Activated T-helper 2 cell treated with anti-CD3 and anti-CD28 coated beads, Interferon-gamma antibody, Interleukin-2, Interleukin-4, amounts not matched to agents 10 μg/mL and 5 μg/mL and 100 μg/mL, durations not matched to agents 14 hours and 24 hours and 36 hours (primary cell): ENCODE measurements at regions of chr16 and their contacts with region 1.

Region 1: DNA sequence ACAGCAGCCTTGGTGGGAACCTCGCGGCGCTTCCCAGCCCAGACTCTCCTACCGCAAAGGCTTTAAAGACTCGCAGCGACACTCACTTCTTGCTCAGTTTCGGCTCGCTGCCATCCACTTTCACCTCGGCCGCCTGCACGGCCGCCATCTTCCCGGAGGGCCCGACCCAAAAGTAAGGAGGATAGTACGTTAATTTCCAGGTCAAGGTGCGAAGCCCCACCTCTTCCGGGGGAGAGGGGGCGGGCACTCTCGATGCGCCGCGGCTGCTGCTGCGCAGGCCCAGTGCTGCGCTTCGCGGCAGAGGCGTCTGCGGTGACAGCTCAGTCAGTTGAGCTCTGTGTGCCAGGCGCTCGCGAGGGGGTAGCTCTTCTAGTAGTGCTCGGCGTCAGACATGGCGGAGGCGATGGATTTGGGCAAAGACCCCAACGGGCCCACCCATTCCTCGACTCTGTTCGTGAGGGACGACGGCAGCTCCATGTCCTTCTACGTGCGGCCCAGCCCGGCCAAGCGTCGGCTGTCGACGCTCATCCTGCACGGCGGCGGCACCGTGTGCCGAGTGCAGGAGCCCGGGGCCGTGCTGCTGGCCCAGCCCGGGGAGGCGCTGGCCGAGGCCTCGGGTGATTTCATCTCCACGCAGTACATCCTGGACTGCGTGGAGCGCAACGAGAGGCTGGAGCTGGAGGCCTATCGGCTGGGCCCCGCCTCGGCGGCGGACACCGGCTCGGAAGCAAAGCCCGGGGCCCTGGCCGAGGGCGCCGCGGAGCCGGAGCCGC is at the starts of genes KARS1 and TERF2IP:
- DNase-seq: peak; percentile 94
- H3K4me3 Mint-ChIP-seq: peak within 1 kb of the TSS; percentile 96
- H3K27ac Mint-ChIP-seq: peak within 1 kb of the TSS; percentile 96
- H3K4me1 Mint-ChIP-seq: peaks cover 48% of the 10 kb centered on the region
- H3K27me3 Mint-ChIP-seq: no peaks in the 10 kb centered on the region
- total RNA-seq, gene KARS1: 256 and 269 TPM in 2 replicates
- total RNA-seq, gene TERF2IP: 73.6 and 77.6 TPM in 2 replicates

Region 2: DNA sequence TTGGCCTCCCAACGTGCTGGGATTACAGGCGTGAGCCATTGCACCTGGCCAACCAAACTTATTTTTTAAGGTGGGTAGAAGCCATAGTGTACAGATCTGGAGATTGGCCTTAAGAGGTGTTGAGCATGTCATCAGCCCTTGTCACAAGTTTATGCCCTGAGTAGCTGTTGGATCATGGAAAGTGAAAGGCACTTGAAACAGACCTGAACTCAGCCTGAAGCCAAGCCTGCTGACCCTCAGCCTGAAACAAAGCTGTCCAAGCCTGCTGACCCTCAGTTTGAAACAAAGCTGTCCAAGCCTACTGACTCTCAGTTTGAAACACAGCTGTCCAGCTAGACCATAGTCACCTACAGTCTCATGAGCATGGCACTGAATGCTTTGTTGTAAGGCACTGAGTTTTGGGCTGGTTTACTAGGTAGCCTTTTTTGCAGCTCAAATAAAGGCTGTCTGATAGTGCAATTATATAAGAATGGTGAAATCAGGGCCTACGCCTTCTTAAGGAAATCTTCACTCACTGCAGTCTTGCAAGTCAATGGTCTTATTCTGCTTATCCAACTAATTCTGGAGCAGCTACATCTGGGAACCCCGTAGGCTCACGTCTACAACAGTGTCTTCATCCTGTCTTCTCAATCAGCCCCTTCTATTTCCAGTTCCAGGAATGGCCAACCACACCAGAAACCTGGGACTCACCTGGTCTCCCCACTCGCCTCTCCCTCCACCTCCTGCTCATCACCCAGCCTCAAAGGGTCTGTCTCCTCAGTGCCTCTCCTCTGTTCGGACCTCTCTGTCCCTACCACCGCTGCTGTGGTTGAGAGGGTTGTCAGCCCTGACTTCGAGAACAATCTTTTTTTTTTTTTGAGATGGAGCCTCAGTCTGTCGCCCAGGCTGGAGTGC is 1274.5 kb before region 1 on chr16:
- intact Hi-C with region 1: loop called (anchors 5 kb)
- DNase-seq: no peak
- H3K4me3 Mint-ChIP-seq: no peak overlapping the region
- H3K27ac Mint-ChIP-seq: no peak overlapping the region
- H3K4me1 Mint-ChIP-seq: peaks cover 2% of the 10 kb centered on the region
- H3K27me3 Mint-ChIP-seq: no peaks in the 10 kb centered on the region

Region 3: GRCh38 chr16:75432828-75433731 is 214.6 kb before region 1 on chr16 and contains the start of gene CFDP1:
- intact Hi-C with region 1: loop called (anchors 1 kb)
- DNase-seq: peak; percentile 93
- H3K4me3 Mint-ChIP-seq: peak within 1 kb of the TSS; percentile 87
- H3K27ac Mint-ChIP-seq: peak within 1 kb of the TSS; percentile 94
- H3K4me1 Mint-ChIP-seq: peaks cover 16% of the 10 kb centered on the region
- H3K27me3 Mint-ChIP-seq: no peaks in the 10 kb centered on the region
- total RNA-seq, gene CFDP1: 33.5 and 37.5 TPM in 2 replicates

Region 4: GRCh38 chr16:75519881-75520280 is 127.8 kb before region 1 on chr16:
- intact Hi-C with region 1: loop called (anchors 1 kb)
- DNase-seq: no peak
- H3K4me3 Mint-ChIP-seq: no peak overlapping the region
- H3K27ac Mint-ChIP-seq: no peak overlapping the region
- H3K4me1 Mint-ChIP-seq: peaks cover 7% of the 10 kb centered on the region
- H3K27me3 Mint-ChIP-seq: peaks cover 7% of the 10 kb centered on the region

Region 5: DNA sequence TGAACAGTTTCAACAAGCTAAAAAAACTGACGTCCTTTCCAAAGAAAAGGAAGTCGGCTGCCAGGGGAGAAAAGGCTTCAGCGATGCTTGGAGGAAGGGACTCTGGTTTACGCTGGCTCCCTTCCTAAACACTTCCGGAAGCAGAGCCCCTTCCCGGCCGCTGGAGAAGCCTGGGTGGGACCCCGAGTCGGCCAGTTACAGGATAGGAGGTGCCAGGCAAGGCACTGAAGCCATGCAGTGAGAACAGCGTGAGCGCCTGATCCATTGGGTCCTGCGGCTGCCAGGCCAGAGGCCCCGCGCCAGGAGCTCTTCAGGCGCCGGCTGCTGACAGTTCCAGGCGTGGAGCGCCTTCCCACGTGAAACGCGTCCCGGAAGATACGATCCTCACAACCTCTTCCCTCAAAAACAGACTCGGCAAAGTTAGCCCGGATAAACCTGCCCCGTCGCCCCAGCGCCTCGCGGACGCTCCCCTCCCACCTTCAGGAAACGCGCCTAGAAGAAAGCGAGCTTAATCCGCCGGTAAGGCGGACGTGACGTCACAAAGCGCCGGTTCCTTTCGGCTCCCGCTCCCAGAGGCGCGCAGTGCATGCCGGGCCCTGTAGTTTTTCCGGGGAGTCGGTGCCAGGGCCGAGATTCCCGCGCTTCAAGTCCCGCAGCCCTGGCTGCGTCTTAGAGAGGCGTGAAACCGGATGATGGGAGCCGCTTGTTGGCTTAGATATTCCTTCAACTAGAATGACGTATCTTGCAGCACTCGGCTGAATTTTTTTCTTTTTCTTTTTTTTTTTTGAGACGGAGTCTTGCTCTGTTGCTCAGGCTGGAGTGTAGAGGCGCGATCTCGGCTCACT is 24.7 kb before region 1 on chr16 and contains the start of gene ADAT1:
- intact Hi-C with region 1: loop called (anchors 1 kb)
- DNase-seq: peak; percentile 96
- H3K4me3 Mint-ChIP-seq: peak within 1 kb of the TSS; percentile 93
- H3K27ac Mint-ChIP-seq: peak within 1 kb of the TSS; percentile 96
- H3K4me1 Mint-ChIP-seq: peaks cover 36% of the 10 kb centered on the region
- H3K27me3 Mint-ChIP-seq: no peaks in the 10 kb centered on the region
- total RNA-seq, gene ADAT1: 45.3 and 54.0 TPM in 2 replicates

Region 6: DNA sequence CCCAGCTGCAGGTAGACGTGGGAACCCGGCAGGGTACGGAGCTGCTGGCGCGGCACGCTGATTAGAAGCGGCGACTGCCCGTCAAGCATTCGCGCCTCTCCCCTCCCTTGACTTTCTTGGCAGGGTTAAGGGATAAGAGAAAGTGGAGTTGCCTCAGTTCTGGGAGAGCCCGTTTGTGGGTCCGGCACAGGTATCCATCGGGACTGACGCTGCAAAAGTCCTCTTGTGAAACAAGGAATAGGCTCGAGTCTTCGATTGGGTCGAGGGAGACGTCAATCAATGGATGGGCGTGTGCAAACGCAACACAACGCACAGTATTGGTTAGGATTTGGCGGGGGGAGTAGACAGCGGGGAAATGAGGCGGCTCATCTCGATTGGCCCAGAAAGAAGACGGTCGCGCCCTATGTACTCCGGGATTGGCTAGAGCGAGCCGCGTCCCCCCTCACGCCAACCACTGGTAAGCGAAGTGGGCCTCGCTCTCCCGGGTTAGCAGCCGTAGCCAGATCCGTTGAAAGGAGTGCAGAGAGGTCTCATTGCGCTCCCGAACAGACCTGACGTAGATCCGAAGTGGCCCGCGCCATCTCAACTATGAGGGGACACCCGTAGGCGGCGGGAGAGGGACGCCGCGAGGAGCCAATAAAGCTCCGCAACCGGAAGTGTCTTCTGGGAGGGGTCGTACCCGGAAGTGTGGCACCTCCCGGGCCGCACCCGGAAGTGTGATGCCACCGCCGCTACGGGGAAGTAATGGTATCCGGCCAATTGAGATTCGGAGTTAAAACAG is 1543.0 kb after region 1 on chr16 and contains the start of gene MON1B:
- intact Hi-C with region 1: loop called (anchors 5 kb)
- DNase-seq: peak; percentile 94
- H3K4me3 Mint-ChIP-seq: peak within 1 kb of the TSS; percentile 97
- H3K27ac Mint-ChIP-seq: peak within 1 kb of the TSS; percentile 100
- H3K4me1 Mint-ChIP-seq: peaks cover 28% of the 10 kb centered on the region
- H3K27me3 Mint-ChIP-seq: peaks cover 3% of the 10 kb centered on the region
- total RNA-seq, gene MON1B: 69.2 and 69.6 TPM in 2 replicates